ENCODE measurements at regions of chr12 and their contacts with region 1.

Region 1: GRCh38 chr12:64672925-64673409 is 62.7 kb downstream of the RASSF3 start:
- DNase-seq: peak; percentile 85
- H3K4me3 Mint-ChIP-seq: peak overlapping the region; percentile 43
- H3K27ac Mint-ChIP-seq: peak overlapping the region; percentile 83
- H3K4me1 Mint-ChIP-seq: peaks cover 91% of the 10 kb centered on the region
- H3K27me3 Mint-ChIP-seq: no peaks in the 10 kb centered on the region
- CTCF ChIP-seq: no peak

Region 2: GRCh38 chr12:64639466-64639865 is 33.5 kb before region 1 on chr12:
- CTCF ChIA-PET with region 1: interaction called, 4 read pairs
- intact Hi-C with region 1: loop called (anchors 1 kb)
- DNase-seq: peak; percentile 63
- H3K4me3 Mint-ChIP-seq: peak overlapping the region; percentile 13
- H3K27ac Mint-ChIP-seq: peak overlapping the region; percentile 95
- H3K4me1 Mint-ChIP-seq: peaks cover 63% of the 10 kb centered on the region
- H3K27me3 Mint-ChIP-seq: no peaks in the 10 kb centered on the region
- CTCF ChIP-seq: no peak

Measured in Calu3 (cell line).